Heart left ventricle (tissue), 16 donors: ENCODE measurements at regions of chr17 and their contacts with region 1.

Region 1: GRCh38 chr17:46841561-46842379 is 9.6 kb upstream of the WNT9B start:
- DNase-seq: no peak
- ATAC-seq: peak in 2 of 4 donors; percentile 73 to 76
- H3K4me3 ChIP-seq: no peak overlapping the region
- H3K27ac ChIP-seq: no peak overlapping the region
- H3K4me1 ChIP-seq: peaks cover 0 to 8% (median 0%) of the 10 kb centered on the region in 12 donors
- H3K27me3 ChIP-seq: peaks cover 3 to 35% (median 15%) of the 10 kb centered on the region in 9 donors
- CTCF ChIP-seq: peak; percentile 64 to 92 (median 77)
- POLR2A ChIP-seq: no peak

Region 2: DNA sequence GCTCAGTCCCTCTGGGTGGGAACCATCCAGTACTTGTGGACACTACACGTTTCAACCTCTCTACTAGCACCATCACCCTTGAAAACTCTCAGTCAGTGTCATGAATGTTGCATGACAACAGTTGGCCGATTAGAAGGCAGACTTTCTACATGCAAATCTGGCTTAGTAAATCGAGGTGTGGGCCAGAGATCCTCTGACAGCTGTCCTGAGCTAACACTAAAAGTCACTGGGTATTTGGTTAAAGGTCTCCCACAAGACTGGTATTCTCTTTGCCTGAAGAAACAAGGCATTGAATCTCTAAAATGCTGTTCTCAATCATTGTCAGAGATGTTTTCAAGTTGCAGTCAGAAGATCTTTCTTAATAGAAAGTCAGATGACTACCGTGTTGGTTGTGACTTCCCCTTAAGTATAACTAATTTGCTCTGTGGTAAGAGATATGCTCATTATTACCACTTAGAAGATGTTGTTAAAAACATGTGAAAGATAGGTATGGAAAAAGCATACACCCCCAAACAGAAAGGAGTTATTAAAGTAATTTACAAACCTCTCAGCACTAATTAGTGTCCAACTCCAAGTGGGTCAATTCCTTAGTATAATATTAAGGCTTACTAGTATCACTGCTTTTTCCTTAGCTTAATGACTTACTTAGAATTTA is 85.6 kb before region 1 on chr17:
- intact Hi-C with region 1: no loop called
- DNase-seq: no peak
- ATAC-seq: no peak
- H3K4me3 ChIP-seq: no peak overlapping the region
- H3K27ac ChIP-seq: no peak overlapping the region
- H3K4me1 ChIP-seq: no peaks in the 10 kb centered on the region
- H3K27me3 ChIP-seq: no peaks in the 10 kb centered on the region
- CTCF ChIP-seq: no peak
- POLR2A ChIP-seq: no peak

Region 3: DNA sequence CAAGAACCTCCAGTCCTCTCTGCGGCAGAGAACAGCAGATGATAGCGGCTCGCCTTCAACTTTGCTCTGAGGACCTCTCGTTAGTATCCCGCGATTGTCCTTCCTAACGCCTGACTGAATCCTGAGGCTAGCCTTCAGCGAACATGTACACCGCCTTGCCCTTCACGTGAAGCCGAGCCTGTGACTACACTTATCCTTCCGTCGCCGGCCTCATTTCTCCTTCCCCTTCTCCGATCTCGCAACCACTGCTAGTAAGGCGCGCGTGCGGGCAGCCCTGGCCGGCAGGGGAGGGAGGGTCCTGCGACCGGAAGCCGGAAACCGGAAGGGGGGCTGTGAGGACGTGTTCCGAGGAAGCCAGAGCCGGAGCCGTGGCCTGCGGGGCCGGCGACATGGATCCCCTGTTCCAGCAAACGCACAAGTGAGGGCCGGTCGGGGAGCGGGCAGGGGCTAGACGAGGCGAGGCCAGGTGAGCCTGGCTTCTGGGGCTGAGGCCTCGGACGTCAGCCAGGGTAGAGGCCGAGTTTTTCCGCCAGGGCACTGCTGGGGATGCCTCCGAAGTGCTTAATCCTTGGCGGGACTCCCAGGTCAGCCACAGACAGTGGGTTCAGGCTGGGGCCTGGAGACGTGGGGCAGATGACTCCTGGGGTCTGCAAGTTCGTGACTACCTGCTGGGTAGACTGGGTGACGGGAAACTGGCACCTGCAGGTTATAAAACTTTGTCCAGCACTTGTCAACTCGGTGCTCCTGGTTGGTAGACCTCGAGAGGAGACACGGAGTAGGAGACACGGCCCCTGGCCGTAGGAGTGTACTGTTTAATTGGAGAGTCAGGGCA is 81.2 kb after region 1 on chr17 and contains the start of gene GOSR2:
- intact Hi-C with region 1: loop called in 2 of 10 experiments (anchors 5 kb)
- DNase-seq: peak; percentile 88 to 96 (median 93)
- ATAC-seq: peak; percentile 95 to 99 (median 99)
- H3K4me3 ChIP-seq: peak within 1 kb of the TSS; percentile 64 to 98 (median 80)
- H3K27ac ChIP-seq: peak within 1 kb of the TSS; percentile 91 to 100 (median 98)
- H3K4me1 ChIP-seq: peaks cover 0 to 47% (median 25%) of the 10 kb centered on the region in 12 donors
- H3K27me3 ChIP-seq: no peaks in the 10 kb centered on the region
- CTCF ChIP-seq: no peak
- POLR2A ChIP-seq: peak in 1 of 2 donors; percentile 86
- total RNA-seq, gene GOSR2: 20.9 to 55.1 (median 38.4) TPM

Region 4: GRCh38 chr17:46940621-46941404 is 99.0 kb after region 1 on chr17:
- intact Hi-C with region 1: loop called (anchors 1 to 5 kb)
- DNase-seq: peak; percentile 72 to 79 (median 76)
- ATAC-seq: peak; percentile 70 to 84 (median 82)
- H3K4me3 ChIP-seq: no peak overlapping the region
- H3K27ac ChIP-seq: no peak overlapping the region
- H3K4me1 ChIP-seq: peaks cover 4 to 27% (median 20%) of the 10 kb centered on the region in 12 donors
- H3K27me3 ChIP-seq: no peaks in the 10 kb centered on the region
- CTCF ChIP-seq: peak; percentile 75 to 87 (median 83)
- POLR2A ChIP-seq: no peak

Region 5: DNA sequence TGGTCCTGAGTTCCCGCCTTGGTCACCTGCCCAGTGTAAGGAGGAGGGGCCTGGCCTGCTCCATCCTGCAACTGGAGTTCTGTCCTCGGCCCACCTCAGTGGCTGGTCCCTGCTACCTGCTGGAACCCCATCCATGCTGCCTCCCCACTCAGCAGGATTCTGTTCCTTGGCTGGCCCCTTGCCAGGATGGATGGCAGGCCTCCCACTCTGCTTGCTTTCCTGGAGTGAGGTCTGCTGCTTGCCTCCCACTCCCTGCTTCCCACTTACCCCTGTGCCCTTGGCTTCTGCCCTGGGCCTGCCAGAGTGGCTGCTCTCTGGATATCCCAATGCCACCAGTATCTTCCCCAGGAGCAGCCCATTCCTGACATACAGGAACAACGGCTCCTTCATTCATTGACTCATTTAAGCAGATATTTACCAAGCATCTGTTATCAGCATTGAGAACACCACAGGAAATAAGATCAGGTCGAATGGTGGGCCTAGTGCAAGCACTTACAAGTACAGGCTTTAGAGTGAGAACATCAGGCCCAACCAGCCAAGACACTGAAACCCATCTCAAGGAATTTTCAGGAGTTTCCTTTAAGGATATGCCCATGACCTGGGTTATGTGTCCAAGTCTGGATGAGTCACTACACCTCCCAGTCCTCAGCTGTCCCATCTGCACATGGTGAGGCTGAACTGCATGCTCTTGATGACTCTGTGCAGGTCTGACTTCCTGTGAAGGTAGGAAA is 154.2 kb after region 1 on chr17:
- intact Hi-C with region 1: loop called (anchors 1 to 10 kb)
- DNase-seq: no peak
- ATAC-seq: peak in 1 of 4 donors; percentile 14
- H3K4me3 ChIP-seq: no peak overlapping the region
- H3K27ac ChIP-seq: no peak overlapping the region
- H3K4me1 ChIP-seq: peaks cover 0 to 2% (median 0%) of the 10 kb centered on the region in 12 donors
- H3K27me3 ChIP-seq: no peaks in the 10 kb centered on the region
- CTCF ChIP-seq: no peak
- POLR2A ChIP-seq: no peak

Region 6: GRCh38 chr17:47004906-47005305 is 163.1 kb after region 1 on chr17:
- intact Hi-C with region 1: loop called in 7 of 10 experiments (anchors 1 to 10 kb)
- DNase-seq: no peak
- ATAC-seq: no peak
- H3K4me3 ChIP-seq: no peak overlapping the region
- H3K27ac ChIP-seq: peak overlapping the region in 8 of 12 donors; percentile 0 to 67 (median 44)
- H3K4me1 ChIP-seq: peaks cover 0 to 18% (median 3%) of the 10 kb centered on the region in 12 donors
- H3K27me3 ChIP-seq: no peaks in the 10 kb centered on the region
- CTCF ChIP-seq: no peak
- POLR2A ChIP-seq: no peak

Region 7: GRCh38 chr17:47009759-47010594 is 168.2 kb after region 1 on chr17:
- intact Hi-C with region 1: loop called in 1 of 10 experiments (anchors 10 kb)
- DNase-seq: peak in 3 of 5 donors; percentile 18 to 53 (median 43)
- ATAC-seq: peak; percentile 76 to 84 (median 80)
- H3K4me3 ChIP-seq: no peak overlapping the region
- H3K27ac ChIP-seq: peak overlapping the region in 10 of 12 donors; percentile 16 to 67 (median 62)
- H3K4me1 ChIP-seq: peaks cover 0 to 12% (median 0%) of the 10 kb centered on the region in 12 donors
- H3K27me3 ChIP-seq: no peaks in the 10 kb centered on the region
- CTCF ChIP-seq: no peak
- POLR2A ChIP-seq: no peak